Endothelial cell of umbilical vein (primary cell): ENCODE measurements at regions of chr11 and their contacts with region 1.

Region 1: GRCh38 chr11:120564573-120565311 is 53.2 kb downstream of the GRIK4 start:
- DNase-seq: peak; percentile 45
- H3K4me3 ChIP-seq: peak overlapping the region in 2 of 3 experiments; percentile 24 to 39
- H3K27ac ChIP-seq: peak overlapping the region; percentile 88
- H3K4me1 ChIP-seq: peaks cover 25% of the 10 kb centered on the region
- H3K27me3 ChIP-seq: no peaks in the 10 kb centered on the region
- CTCF ChIP-seq: peak in 1 of 2 donors; percentile 30
- POLR2A ChIP-seq: no peak

Region 2: DNA sequence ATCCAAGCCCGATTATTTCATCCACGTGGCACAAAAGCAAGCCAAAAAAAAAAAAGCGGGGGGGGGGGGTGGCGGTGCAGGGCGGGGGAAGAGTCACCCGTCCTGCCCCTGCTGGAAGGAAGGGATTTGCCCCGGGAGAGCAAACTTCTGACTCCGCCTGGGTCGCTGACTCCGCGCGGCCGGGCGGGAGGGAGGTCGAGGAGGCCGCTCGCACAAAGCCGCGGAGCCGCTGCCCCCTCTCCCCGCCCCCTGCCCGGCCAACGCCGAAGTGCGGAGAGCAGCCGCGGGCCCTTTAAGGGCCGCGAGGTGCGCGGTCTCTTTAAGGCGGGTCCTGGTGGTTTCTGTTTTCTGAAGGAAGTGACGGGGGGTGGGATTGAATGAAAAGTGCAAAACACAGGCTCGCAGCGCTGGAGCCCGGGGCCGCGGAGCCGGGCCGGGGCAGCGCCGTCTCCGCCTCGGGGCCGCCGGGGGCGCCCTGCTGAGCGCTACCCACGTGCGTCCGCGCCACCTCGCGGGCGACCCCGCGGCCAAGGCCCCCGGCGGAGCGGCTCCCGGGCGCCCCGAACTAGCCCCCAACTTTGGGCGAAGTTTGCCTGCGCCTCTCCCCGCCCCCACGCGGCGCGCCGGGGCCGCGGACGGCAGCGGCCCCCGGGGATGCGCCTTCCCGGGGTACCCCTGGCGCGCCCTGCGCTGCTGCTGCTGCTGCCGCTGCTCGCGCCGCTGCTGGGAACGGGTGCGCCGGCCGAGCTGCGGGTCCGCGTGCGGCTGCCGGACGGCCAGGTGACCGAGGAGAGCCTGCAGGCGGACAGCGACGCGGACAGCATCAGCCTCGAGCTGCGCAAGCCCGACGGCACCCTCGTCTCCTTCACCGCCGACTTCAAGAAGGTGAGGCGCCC is 353.9 kb before region 1 on chr11 and contains the start of gene OAF:
- CTCF ChIA-PET with region 1: no interaction called
- POLR2A ChIA-PET with region 1: no interaction called
- dilution Hi-C with region 1: no loop called
- intact Hi-C with region 1: loop called (anchors 10 kb)
- DNase-seq: peak; percentile 84
- H3K4me3 ChIP-seq: peak within 1 kb of the TSS; percentile 37 to 67 (median 60)
- H3K27ac ChIP-seq: peak within 1 kb of the TSS; percentile 47
- H3K4me1 ChIP-seq: peaks cover 40% of the 10 kb centered on the region
- H3K27me3 ChIP-seq: no peaks in the 10 kb centered on the region
- CTCF ChIP-seq: peak in 1 of 2 donors; percentile 13
- POLR2A ChIP-seq: peak; percentile 86
- total RNA-seq, gene OAF: 26.7 and 32.1 TPM in 2 replicates

Region 3: GRCh38 chr11:120344302-120345004 is 220.3 kb before region 1 on chr11:
- CTCF ChIA-PET with region 1: no interaction called
- POLR2A ChIA-PET with region 1: no interaction called
- dilution Hi-C with region 1: no loop called
- intact Hi-C with region 1: no loop called
- DNase-seq: no peak
- H3K4me3 ChIP-seq: no peak overlapping the region
- H3K27ac ChIP-seq: no peak overlapping the region
- H3K4me1 ChIP-seq: peaks cover 59% of the 10 kb centered on the region
- H3K27me3 ChIP-seq: no peaks in the 10 kb centered on the region
- CTCF ChIP-seq: no peak
- POLR2A ChIP-seq: no peak

Region 4: DNA sequence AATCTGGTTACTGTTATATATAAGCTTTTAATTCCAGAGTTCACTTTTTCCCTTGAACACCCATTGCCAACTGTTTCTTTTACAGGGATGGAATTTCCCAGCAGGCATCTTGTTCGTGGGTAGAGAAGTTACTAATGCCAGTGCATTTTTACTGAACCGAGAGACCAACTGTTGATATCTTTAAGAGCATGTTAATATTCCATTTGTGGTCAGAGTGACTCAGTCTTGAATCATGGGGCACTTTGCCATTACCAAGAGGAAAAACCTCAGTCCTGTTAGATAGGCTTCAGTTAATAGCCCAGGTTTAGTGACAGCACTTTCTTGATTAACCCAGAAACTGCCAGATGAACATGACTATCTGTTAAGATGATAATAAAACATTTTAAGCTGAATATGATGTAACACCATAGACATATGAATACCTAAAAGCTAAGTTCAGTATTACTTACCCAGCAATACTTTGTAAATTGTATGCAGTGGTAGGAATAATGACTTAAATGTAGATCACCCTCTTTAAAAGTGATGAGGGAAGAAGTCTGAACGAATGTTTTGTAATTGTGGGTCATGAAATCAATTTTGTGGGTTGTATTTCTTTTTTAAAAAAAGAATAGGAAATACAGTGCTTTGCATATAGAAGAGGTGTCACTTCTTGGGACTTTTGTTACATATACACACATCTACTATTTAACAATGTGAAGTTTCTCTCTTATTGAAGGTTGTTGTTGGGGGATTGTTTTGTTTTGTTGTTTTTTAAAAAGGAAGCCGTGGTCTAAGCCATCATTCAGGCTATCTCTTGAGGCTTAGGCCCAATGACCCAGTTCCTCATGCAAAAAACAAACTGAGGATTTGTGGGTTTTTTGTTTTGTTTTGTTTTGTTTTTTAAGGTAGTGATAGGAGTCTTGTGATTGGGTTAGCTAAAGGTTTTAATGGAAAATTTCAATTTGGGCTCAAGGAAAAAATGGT is 132.4 kb before region 1 on chr11:
- CTCF ChIA-PET with region 1: no interaction called
- POLR2A ChIA-PET with region 1: no interaction called
- dilution Hi-C with region 1: no loop called
- intact Hi-C with region 1: loop called (anchors 1 kb)
- DNase-seq: peak; percentile 97
- H3K4me3 ChIP-seq: no peak overlapping the region
- H3K27ac ChIP-seq: peak overlapping the region; percentile 75
- H3K4me1 ChIP-seq: peaks cover 20% of the 10 kb centered on the region
- H3K27me3 ChIP-seq: no peaks in the 10 kb centered on the region
- CTCF ChIP-seq: no peak
- POLR2A ChIP-seq: no peak

Region 5: DNA sequence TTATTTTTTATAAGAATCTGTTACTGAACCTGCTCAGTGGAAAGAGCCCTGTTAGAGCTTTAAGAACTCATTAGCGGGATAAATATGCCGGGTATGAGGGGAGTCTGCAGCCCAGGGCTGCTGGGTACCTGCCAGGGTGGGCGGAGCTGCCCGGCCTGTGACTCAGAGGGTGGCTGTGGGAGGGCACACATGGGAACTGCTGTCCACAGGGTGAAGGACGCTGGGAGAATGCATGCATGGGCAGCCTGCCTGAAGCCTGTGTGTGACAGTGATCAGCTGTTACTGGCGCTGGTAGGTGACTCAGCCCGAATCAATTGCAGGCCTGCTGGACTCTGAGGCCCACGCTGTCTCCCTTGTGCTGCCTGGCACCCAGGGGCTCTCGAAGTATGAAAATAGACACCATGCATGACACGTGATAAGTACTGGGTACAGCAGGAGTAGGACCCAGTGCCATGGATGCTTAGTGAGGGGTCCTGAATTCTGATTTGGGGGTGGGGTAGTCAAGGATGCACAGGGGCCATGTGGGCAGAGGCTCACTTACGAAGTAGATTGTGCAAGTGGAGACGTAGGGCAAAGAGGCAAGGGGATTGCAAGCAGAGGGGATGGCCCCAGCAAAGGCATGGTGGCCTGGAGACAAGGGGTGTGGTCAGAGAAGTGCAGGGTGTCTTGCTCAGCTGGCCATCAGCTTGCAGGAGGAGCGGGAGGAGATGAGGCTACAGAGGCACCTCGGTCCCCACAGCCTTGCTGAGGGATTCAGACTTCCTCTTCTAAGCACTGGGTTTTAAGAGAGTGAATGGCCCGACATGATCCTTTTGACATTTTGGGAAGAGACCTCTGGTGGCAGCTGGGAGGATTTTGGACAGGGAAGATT is 16.7 kb before region 1 on chr11:
- CTCF ChIA-PET with region 1: interaction called, 20 read pairs
- POLR2A ChIA-PET with region 1: interaction called, 3 read pairs
- dilution Hi-C with region 1: no loop called
- intact Hi-C with region 1: loop called (anchors 1 kb)
- DNase-seq: peak; percentile 91
- H3K4me3 ChIP-seq: no peak overlapping the region
- H3K27ac ChIP-seq: no peak overlapping the region
- H3K4me1 ChIP-seq: peaks cover 13% of the 10 kb centered on the region
- H3K27me3 ChIP-seq: no peaks in the 10 kb centered on the region
- CTCF ChIP-seq: no peak
- POLR2A ChIP-seq: no peak

Region 6: GRCh38 chr11:120579611-120580031 is 14.9 kb after region 1 on chr11:
- CTCF ChIA-PET with region 1: interaction called, 10 read pairs
- POLR2A ChIA-PET with region 1: no interaction called
- dilution Hi-C with region 1: no loop called
- intact Hi-C with region 1: no loop called
- DNase-seq: no peak
- H3K4me3 ChIP-seq: no peak overlapping the region
- H3K27ac ChIP-seq: no peak overlapping the region
- H3K4me1 ChIP-seq: no peaks in the 10 kb centered on the region
- H3K27me3 ChIP-seq: peaks cover 2 to 3% of the 10 kb centered on the region in 2 experiments
- CTCF ChIP-seq: no peak
- POLR2A ChIP-seq: no peak

Region 7: DNA sequence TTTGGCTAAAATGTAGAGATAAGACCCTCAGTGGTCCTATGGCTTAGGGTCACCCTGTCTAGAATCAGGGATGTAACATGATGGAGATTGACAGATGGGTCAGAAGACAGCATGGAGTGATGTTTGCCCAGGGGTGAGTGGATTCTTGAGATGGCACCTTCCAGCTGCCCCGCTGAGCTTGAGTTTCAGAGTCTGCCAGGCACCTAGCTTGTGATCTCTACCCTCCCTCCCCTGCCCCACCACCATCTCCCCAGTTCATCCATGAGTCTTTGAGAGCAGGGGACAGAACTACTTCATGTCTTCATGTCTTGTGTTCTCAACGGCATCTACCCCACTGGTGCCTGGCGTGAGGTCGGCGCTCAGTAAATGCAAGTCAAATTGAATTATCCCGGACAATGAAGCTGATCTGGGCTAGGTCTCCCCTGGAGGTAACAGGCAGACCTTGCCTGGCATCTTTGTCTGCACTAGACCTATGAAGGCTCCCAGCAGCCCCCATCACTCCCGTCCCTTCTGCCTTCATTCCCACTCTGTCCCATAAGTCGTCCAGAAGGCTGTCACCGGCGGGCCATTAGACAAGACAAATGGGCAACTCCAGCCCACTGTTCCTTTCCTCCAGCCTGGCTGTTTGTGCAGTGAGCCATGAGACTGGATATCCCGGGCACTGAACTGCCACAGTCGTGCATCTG is 220.0 kb after region 1 on chr11:
- CTCF ChIA-PET with region 1: no interaction called
- POLR2A ChIA-PET with region 1: no interaction called
- dilution Hi-C with region 1: no loop called
- intact Hi-C with region 1: loop called (anchors 1 kb)
- DNase-seq: no peak
- H3K4me3 ChIP-seq: no peak overlapping the region
- H3K27ac ChIP-seq: no peak overlapping the region
- H3K4me1 ChIP-seq: peaks cover 13% of the 10 kb centered on the region
- H3K27me3 ChIP-seq: peaks cover 2 to 5% of the 10 kb centered on the region in 2 experiments
- CTCF ChIP-seq: no peak
- POLR2A ChIP-seq: no peak